Ascending aorta (tissue), 2 donors: ENCODE measurements at regions of chr11 and their contacts with region 1.

Region 1: GRCh38 chr11:72585762-72586311 is 88.4 kb downstream of the PDE2A start:
- DNase-seq: peak in 1 of 2 donors; percentile 84
- H3K4me3 ChIP-seq: no peak overlapping the region
- H3K27ac ChIP-seq: no peak overlapping the region
- H3K4me1 ChIP-seq: peaks cover 7 to 16% of the 10 kb centered on the region in 2 donors
- H3K27me3 ChIP-seq: peaks cover 16% of the 10 kb centered on the region
- CTCF ChIP-seq: peak; percentile 89 to 95 (median 91)

Region 2: GRCh38 chr11:72642884-72643511 is 57.2 kb after region 1 on chr11:
- intact Hi-C with region 1: loop called (anchors 1 kb)
- DNase-seq: peak in 1 of 2 donors; percentile 74
- H3K4me3 ChIP-seq: peak overlapping the region; percentile 62 to 75
- H3K27ac ChIP-seq: peak overlapping the region in 1 of 2 donors; percentile 35
- H3K4me1 ChIP-seq: peaks cover 3 to 5% of the 10 kb centered on the region in 2 donors
- H3K27me3 ChIP-seq: peaks cover 9% of the 10 kb centered on the region
- CTCF ChIP-seq: peak; percentile 94 to 99 (median 96)

Region 3: GRCh38 chr11:72683782-72684200 is 98.0 kb after region 1 on chr11:
- intact Hi-C with region 1: loop called (anchors 1 kb)
- DNase-seq: peak in 1 of 2 donors; percentile 85
- H3K4me3 ChIP-seq: no peak overlapping the region
- H3K27ac ChIP-seq: no peak overlapping the region
- H3K4me1 ChIP-seq: no peaks in the 10 kb centered on the region
- H3K27me3 ChIP-seq: no peaks in the 10 kb centered on the region
- CTCF ChIP-seq: peak; percentile 89 to 98 (median 97)